ENCODE measurements at regions of chr17 and their contacts with region 1.

Region 1: GRCh38 chr17:34542700-34543336 is 36.6 kb upstream of the TMEM132E start:
- DNase-seq: peak; percentile 18 to 58 (median 35)
- ATAC-seq: peak; percentile 62
- H3K4me3 ChIP-seq: no peak overlapping the region
- H3K4me3 Mint-ChIP-seq: no peak overlapping the region
- H3K27ac ChIP-seq: no peak overlapping the region
- H3K27ac Mint-ChIP-seq: no peak overlapping the region
- H3K4me1 ChIP-seq: no peaks in the 10 kb centered on the region
- H3K4me1 Mint-ChIP-seq: no peaks in the 10 kb centered on the region
- H3K27me3 ChIP-seq: no peaks in the 10 kb centered on the region
- H3K27me3 Mint-ChIP-seq: peaks cover 21 to 34% (median 30%) of the 10 kb centered on the region in 5 donors

Region 2: GRCh38 chr17:34578016-34578415 is 35.2 kb after region 1 on chr17:
- CTCF ChIA-PET with region 1: no interaction called
- POLR2A ChIA-PET with region 1: no interaction called
- intact Hi-C with region 1: no loop called
- DNase-seq: no peak
- ATAC-seq: no peak
- H3K4me3 ChIP-seq: no peak overlapping the region
- H3K4me3 Mint-ChIP-seq: peak overlapping the region in 7 of 10 donors; percentile 63 to 83 (median 81)
- H3K27ac ChIP-seq: no peak overlapping the region
- H3K27ac Mint-ChIP-seq: no peak overlapping the region
- H3K4me1 ChIP-seq: peaks cover 0 to 6% of the 10 kb centered on the region in 2 donors
- H3K4me1 Mint-ChIP-seq: peaks cover 6 to 16% (median 10%) of the 10 kb centered on the region in 7 donors
- H3K27me3 ChIP-seq: peaks cover 0 to 8% of the 10 kb centered on the region in 2 donors
- H3K27me3 Mint-ChIP-seq: peaks cover 55 to 78% (median 75%) of the 10 kb centered on the region in 5 donors

Region 3: GRCh38 chr17:34892461-34893249 is 349.8 kb after region 1 on chr17:
- CTCF ChIA-PET with region 1: no interaction called
- POLR2A ChIA-PET with region 1: no interaction called
- intact Hi-C with region 1: loop called in 1 of 2 experiments (anchors 1 kb)
- DNase-seq: peak in 6 of 9 donors; percentile 10 to 38 (median 30)
- ATAC-seq: no peak
- H3K4me3 ChIP-seq: no peak overlapping the region
- H3K4me3 Mint-ChIP-seq: no peak overlapping the region
- H3K27ac ChIP-seq: no peak overlapping the region
- H3K27ac Mint-ChIP-seq: no peak overlapping the region
- H3K4me1 ChIP-seq: no peaks in the 10 kb centered on the region
- H3K4me1 Mint-ChIP-seq: peaks cover 0 to 2% (median 0%) of the 10 kb centered on the region in 7 donors
- H3K27me3 ChIP-seq: no peaks in the 10 kb centered on the region
- H3K27me3 Mint-ChIP-seq: peaks cover 20 to 53% (median 24%) of the 10 kb centered on the region in 5 donors

Region 4: DNA sequence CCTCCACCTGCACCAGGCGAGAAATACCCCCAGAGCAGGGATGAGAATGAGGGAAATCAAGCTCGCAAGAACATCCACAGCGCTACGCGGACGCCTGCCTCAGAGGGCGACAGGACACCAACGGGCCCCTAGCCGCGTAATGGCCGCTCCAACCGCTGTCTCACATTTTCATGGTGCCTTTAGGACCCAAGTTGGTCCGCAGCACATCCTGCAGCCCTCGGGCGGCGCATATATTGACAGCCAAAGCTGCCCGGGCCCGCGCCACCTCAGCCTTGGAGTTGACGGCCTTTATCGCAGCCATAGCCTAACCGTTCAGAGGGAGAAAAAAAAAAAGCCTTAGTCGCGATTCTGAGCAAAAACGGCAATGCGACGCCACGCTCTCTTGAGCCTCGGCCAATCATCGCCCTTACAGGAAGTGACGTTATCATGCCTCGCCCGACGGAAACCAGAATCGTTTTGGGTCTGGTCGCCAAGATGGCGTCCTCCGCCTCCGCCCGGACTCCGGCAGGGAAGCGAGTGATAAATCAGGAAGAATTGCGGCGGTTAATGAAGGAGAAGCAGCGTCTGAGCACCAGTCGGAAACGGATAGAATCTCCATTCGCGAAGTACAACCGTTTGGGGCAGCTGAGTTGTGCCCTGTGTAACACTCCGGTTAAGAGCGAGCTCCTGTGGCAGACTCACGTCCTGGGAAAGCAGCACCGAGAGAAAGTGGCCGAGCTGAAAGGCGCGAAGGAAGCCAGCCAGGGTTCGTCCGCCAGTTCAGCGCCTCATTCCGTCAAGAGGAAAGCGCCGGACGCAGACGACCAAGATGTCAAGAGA is 418.5 kb after region 1 on chr17 and contains the starts of genes CCT6B and ZNF830:
- CTCF ChIA-PET with region 1: no interaction called
- POLR2A ChIA-PET with region 1: no interaction called
- intact Hi-C with region 1: loop called in 1 of 2 experiments (anchors 10 kb)
- DNase-seq: peak; percentile 69 to 94 (median 91)
- ATAC-seq: peak; percentile 95
- H3K4me3 ChIP-seq: peak within 1 kb of the TSS; percentile 94
- H3K4me3 Mint-ChIP-seq: peak within 1 kb of the TSS; percentile 97 to 100 (median 99)
- H3K27ac ChIP-seq: peak within 1 kb of the TSS; percentile 92
- H3K27ac Mint-ChIP-seq: peak within 1 kb of the TSS; percentile 98 to 100 (median 99)
- H3K4me1 ChIP-seq: peaks cover 14 to 16% of the 10 kb centered on the region in 2 donors
- H3K4me1 Mint-ChIP-seq: peaks cover 19 to 38% (median 33%) of the 10 kb centered on the region in 7 donors
- H3K27me3 ChIP-seq: no peaks in the 10 kb centered on the region
- H3K27me3 Mint-ChIP-seq: peaks cover 0 to 10% (median 5%) of the 10 kb centered on the region in 5 donors
- total RNA-seq, gene CCT6B: 1.6 to 3.8 (median 2.4) TPM
- total RNA-seq, gene ZNF830: 26.9 to 47.3 (median 44.9) TPM